ENCODE measurements at regions of chr14 and their contacts with region 1.

Region 1: DNA sequence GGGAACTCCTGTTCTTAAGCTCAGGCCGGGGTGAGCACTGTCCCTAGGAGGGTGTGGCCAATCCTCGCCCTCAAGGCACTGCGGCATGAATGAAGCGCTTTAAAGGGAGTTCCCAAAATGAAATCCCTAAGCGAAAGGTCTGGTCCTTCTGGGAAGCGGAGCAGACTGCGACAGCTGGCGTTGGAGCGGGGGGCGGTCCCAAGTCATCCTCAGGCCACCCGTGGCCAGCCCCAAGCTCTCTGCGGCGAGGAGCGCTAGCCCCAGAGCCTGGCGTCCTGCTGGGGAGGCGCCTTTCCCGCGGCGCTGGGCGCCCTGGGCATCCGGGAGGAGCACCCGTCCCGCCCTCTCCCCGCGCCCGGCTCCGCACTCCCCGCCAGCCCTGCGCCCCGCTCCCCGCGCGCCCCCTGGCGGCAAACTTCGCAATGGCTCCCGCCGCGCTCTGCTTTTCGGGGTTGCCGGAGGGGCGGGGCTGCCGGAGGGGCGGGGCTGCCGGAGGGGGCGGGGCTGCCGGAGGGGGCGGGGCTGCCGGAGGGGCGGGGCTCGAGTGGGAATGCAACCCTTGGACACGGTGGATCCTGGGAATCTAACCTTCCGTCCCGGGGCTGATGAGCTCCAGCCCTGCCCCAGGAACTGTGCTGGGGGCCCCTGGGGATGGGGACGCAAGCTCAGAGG is 25.4 kb downstream of the ZBTB42 start:
- DNase-seq: peak; percentile 89 to 96 (median 94)
- H3K4me3 ChIP-seq: peak overlapping the region; percentile 81
- H3K4me3 Mint-ChIP-seq: peak overlapping the region; percentile 67 to 87 (median 83)
- H3K27ac ChIP-seq: no peak overlapping the region
- H3K27ac Mint-ChIP-seq: peak overlapping the region in 1 of 8 donors; percentile 36
- H3K4me1 ChIP-seq: peaks cover 8% of the 10 kb centered on the region
- H3K4me1 Mint-ChIP-seq: peaks cover 22 to 27% (median 24%) of the 10 kb centered on the region in 3 donors
- H3K27me3 ChIP-seq: no peaks in the 10 kb centered on the region
- H3K27me3 Mint-ChIP-seq: no peaks in the 10 kb centered on the region

Region 2: DNA sequence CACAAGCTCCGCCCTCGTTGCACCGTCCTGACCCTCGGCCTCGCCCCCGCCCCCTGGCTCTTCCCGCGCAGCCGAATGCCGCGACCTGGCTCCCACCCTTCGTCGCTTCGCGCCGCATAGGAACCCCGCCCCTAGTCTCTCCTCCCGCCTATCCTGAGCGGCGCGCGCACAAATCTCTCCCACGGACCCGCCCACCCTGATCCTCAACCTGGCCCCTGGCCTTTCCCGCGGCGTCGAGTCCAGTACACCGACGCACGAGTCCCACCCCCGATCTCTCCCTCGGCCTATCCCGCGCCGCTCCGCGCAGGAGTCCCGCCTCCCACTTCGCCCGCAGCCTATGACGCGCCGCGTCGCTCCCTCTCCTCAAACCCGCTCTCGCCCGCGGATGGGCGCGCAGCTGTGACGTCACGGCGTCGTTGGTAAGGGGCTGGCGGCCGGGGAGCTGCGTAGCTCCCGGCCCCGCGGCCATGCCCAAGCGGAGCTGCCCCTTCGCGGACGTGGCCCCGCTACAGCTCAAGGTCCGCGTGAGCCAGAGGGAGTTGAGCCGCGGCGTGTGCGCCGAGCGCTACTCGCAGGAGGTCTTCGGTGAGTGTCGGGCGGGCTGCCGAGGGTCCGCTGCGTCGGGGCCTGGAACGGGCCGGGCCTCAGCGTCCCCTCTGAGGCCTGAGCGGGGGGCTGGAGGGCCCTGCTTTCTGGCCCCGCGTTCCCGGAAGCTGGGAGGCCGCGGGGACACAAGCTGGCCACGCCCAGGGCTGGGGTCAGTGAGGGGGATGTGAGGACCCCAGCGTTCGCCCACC is 73.4 kb before region 1 on chr14 and contains the start of gene SIVA1:
- CTCF ChIA-PET with region 1: interaction called, 16 read pairs
- POLR2A ChIA-PET with region 1: interaction called, 12 read pairs
- DNase-seq: peak; percentile 98 to 99 (median 99)
- H3K4me3 ChIP-seq: peak within 1 kb of the TSS; percentile 87
- H3K4me3 Mint-ChIP-seq: peak within 1 kb of the TSS; percentile 88 to 93 (median 92)
- H3K27ac ChIP-seq: peak within 1 kb of the TSS; percentile 91
- H3K27ac Mint-ChIP-seq: peak within 1 kb of the TSS; percentile 86 to 97 (median 92)
- H3K4me1 ChIP-seq: peaks cover 20% of the 10 kb centered on the region
- H3K4me1 Mint-ChIP-seq: peaks cover 27 to 58% (median 28%) of the 10 kb centered on the region in 3 donors
- H3K27me3 ChIP-seq: no peaks in the 10 kb centered on the region
- H3K27me3 Mint-ChIP-seq: no peaks in the 10 kb centered on the region
- total RNA-seq, gene SIVA1: 150 to 175 TPM

Region 3: GRCh38 chr14:104768437-104769323 is 57.6 kb before region 1 on chr14:
- CTCF ChIA-PET with region 1: interaction called, 118 read pairs
- POLR2A ChIA-PET with region 1: interaction called, 5 read pairs
- DNase-seq: peak; percentile 80 to 91 (median 86)
- H3K4me3 ChIP-seq: no peak overlapping the region
- H3K4me3 Mint-ChIP-seq: no peak overlapping the region
- H3K27ac ChIP-seq: no peak overlapping the region
- H3K27ac Mint-ChIP-seq: peak overlapping the region in 3 of 8 donors; percentile 11 to 75 (median 51)
- H3K4me1 ChIP-seq: no peaks in the 10 kb centered on the region
- H3K4me1 Mint-ChIP-seq: peaks cover 0 to 15% (median 3%) of the 10 kb centered on the region in 3 donors
- H3K27me3 ChIP-seq: no peaks in the 10 kb centered on the region
- H3K27me3 Mint-ChIP-seq: no peaks in the 10 kb centered on the region

Region 4: GRCh38 chr14:104800015-104800770 is 26.1 kb before region 1 on chr14:
- CTCF ChIA-PET with region 1: interaction called, 15 read pairs
- POLR2A ChIA-PET with region 1: interaction called, 8 read pairs
- DNase-seq: peak; percentile 73 to 89 (median 79)
- H3K4me3 ChIP-seq: peak overlapping the region; percentile 2
- H3K4me3 Mint-ChIP-seq: peak overlapping the region; percentile 69 to 89 (median 77)
- H3K27ac ChIP-seq: peak overlapping the region; percentile 59
- H3K27ac Mint-ChIP-seq: peak overlapping the region; percentile 37 to 91 (median 84)
- H3K4me1 ChIP-seq: peaks cover 30% of the 10 kb centered on the region
- H3K4me1 Mint-ChIP-seq: peaks cover 15 to 62% (median 23%) of the 10 kb centered on the region in 3 donors
- H3K27me3 ChIP-seq: no peaks in the 10 kb centered on the region
- H3K27me3 Mint-ChIP-seq: no peaks in the 10 kb centered on the region